ENCODE measurements at regions of chr17 and their contacts with region 1.

Region 1: GRCh38 chr17:2401426-2402221 is 764 bp upstream of the MNT start:
- DNase-seq: peak; percentile 99
- ATAC-seq: peak; percentile 58
- H3K4me3 Mint-ChIP-seq: peak overlapping the region; percentile 94
- H3K27ac Mint-ChIP-seq: peak overlapping the region; percentile 99
- H3K4me1 Mint-ChIP-seq: peaks cover 39% of the 10 kb centered on the region
- H3K27me3 Mint-ChIP-seq: no peaks in the 10 kb centered on the region
- CTCF ChIP-seq: no peak

Region 2: GRCh38 chr17:2029911-2030778 is 371.5 kb before region 1 on chr17 and contains the start of gene DPH1:
- CTCF ChIA-PET with region 1: no interaction called
- POLR2A ChIA-PET with region 1: no interaction called
- intact Hi-C with region 1: loop called (anchors 1 kb)
- DNase-seq: peak; percentile 80
- ATAC-seq: peak; percentile 78
- H3K4me3 Mint-ChIP-seq: peak within 1 kb of the TSS; percentile 96
- H3K27ac Mint-ChIP-seq: peak within 1 kb of the TSS; percentile 83
- H3K4me1 Mint-ChIP-seq: peaks cover 40% of the 10 kb centered on the region
- H3K27me3 Mint-ChIP-seq: peaks cover 25% of the 10 kb centered on the region
- CTCF ChIP-seq: no peak
- total RNA-seq, gene DPH1: 49.3 and 63.4 TPM in 2 replicates

Region 3: GRCh38 chr17:2303204-2304188 is 98.1 kb before region 1 on chr17 and contains the starts of genes SMG6 and SRR:
- CTCF ChIA-PET with region 1: no interaction called
- POLR2A ChIA-PET with region 1: interaction called, 5 read pairs
- intact Hi-C with region 1: loop called (anchors 1 kb)
- DNase-seq: peak; percentile 87
- ATAC-seq: peak; percentile 90
- H3K4me3 Mint-ChIP-seq: peak within 1 kb of the TSS; percentile 88
- H3K27ac Mint-ChIP-seq: peak within 1 kb of the TSS; percentile 65
- H3K4me1 Mint-ChIP-seq: peaks cover 14% of the 10 kb centered on the region
- H3K27me3 Mint-ChIP-seq: no peaks in the 10 kb centered on the region
- CTCF ChIP-seq: no peak
- total RNA-seq, gene SMG6: 22.0 and 30.5 TPM in 2 replicates
- total RNA-seq, gene SRR: 5.7 and 8.6 TPM in 2 replicates

Region 4: DNA sequence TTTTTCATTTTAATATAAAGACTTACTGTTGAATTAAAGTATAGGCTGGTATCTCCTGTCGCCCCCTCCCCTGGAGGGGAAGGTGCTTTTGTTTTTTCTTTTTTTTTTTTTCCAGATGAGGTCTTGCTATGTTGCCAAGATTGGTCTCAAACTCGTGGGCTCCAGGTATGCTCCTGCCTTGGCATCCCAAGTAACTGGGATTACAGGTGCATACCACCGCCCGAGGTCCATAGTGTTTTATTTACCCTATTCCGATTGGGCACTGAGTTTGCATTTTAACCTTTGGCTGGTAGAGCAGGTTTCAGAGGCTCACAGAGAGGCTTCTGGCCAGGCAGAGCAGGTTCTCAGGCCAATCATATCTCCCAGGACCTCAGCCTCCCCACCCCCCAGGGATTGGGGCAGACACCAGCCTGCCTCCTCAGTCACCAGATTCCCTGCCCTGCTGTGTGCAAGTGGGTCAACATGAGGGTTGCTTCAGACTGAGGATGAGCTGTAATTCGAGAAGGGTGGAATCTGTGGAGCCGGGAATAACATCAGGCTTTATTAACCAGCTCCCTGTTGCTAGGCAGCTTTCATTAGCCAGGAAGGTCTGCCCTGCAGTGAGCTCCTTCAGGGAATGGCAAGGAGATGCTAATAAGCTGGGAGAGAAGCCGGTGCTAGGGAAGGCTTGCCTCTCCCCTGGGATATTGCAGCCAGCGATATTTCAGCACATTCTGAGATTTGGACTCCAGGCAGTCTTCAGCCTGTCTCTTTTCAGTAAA is 53.9 kb before region 1 on chr17:
- CTCF ChIA-PET with region 1: no interaction called
- POLR2A ChIA-PET with region 1: no interaction called
- intact Hi-C with region 1: no loop called
- DNase-seq: no peak
- ATAC-seq: no peak
- H3K4me3 Mint-ChIP-seq: no peak overlapping the region
- H3K27ac Mint-ChIP-seq: no peak overlapping the region
- H3K4me1 Mint-ChIP-seq: no peaks in the 10 kb centered on the region
- H3K27me3 Mint-ChIP-seq: no peaks in the 10 kb centered on the region
- CTCF ChIP-seq: no peak

Region 5: GRCh38 chr17:2373179-2373578 is 28.4 kb before region 1 on chr17:
- CTCF ChIA-PET with region 1: no interaction called
- POLR2A ChIA-PET with region 1: no interaction called
- intact Hi-C with region 1: no loop called
- DNase-seq: no peak
- ATAC-seq: no peak
- H3K4me3 Mint-ChIP-seq: no peak overlapping the region
- H3K27ac Mint-ChIP-seq: no peak overlapping the region
- H3K4me1 Mint-ChIP-seq: no peaks in the 10 kb centered on the region
- H3K27me3 Mint-ChIP-seq: no peaks in the 10 kb centered on the region
- CTCF ChIP-seq: no peak

Region 6: GRCh38 chr17:2386400-2387085 is 15.1 kb before region 1 on chr17:
- CTCF ChIA-PET with region 1: interaction called, 45 read pairs
- POLR2A ChIA-PET with region 1: interaction called, 103 read pairs
- intact Hi-C with region 1: loop called (anchors 1 kb)
- DNase-seq: no peak
- ATAC-seq: no peak
- H3K4me3 Mint-ChIP-seq: no peak overlapping the region
- H3K27ac Mint-ChIP-seq: no peak overlapping the region
- H3K4me1 Mint-ChIP-seq: peaks cover 14% of the 10 kb centered on the region
- H3K27me3 Mint-ChIP-seq: no peaks in the 10 kb centered on the region
- CTCF ChIP-seq: no peak

Region 7: GRCh38 chr17:2500446-2500845 is 98.8 kb after region 1 on chr17:
- CTCF ChIA-PET with region 1: no interaction called
- POLR2A ChIA-PET with region 1: no interaction called
- intact Hi-C with region 1: no loop called
- DNase-seq: no peak
- ATAC-seq: no peak
- H3K4me3 Mint-ChIP-seq: no peak overlapping the region
- H3K27ac Mint-ChIP-seq: no peak overlapping the region
- H3K4me1 Mint-ChIP-seq: peaks cover 14% of the 10 kb centered on the region
- H3K27me3 Mint-ChIP-seq: no peaks in the 10 kb centered on the region
- CTCF ChIP-seq: no peak

Region 8: GRCh38 chr17:2592971-2593820 is 191.6 kb after region 1 on chr17 and contains the start of gene PAFAH1B1:
- CTCF ChIA-PET with region 1: no interaction called
- POLR2A ChIA-PET with region 1: no interaction called
- intact Hi-C with region 1: loop called (anchors 1 kb)
- DNase-seq: peak; percentile 94
- ATAC-seq: peak; percentile 79
- H3K4me3 Mint-ChIP-seq: peak within 1 kb of the TSS; percentile 94
- H3K27ac Mint-ChIP-seq: peak within 1 kb of the TSS; percentile 90
- H3K4me1 Mint-ChIP-seq: peaks cover 32% of the 10 kb centered on the region
- H3K27me3 Mint-ChIP-seq: no peaks in the 10 kb centered on the region
- CTCF ChIP-seq: no peak
- total RNA-seq, gene PAFAH1B1: 134 and 138 TPM in 2 replicates

Measured in activated B cell treated with CpG ODN at 0.5 μM for 24 hours (primary cell).